ENCODE measurements at regions of chr19 and their contacts with region 1.

Region 1: DNA sequence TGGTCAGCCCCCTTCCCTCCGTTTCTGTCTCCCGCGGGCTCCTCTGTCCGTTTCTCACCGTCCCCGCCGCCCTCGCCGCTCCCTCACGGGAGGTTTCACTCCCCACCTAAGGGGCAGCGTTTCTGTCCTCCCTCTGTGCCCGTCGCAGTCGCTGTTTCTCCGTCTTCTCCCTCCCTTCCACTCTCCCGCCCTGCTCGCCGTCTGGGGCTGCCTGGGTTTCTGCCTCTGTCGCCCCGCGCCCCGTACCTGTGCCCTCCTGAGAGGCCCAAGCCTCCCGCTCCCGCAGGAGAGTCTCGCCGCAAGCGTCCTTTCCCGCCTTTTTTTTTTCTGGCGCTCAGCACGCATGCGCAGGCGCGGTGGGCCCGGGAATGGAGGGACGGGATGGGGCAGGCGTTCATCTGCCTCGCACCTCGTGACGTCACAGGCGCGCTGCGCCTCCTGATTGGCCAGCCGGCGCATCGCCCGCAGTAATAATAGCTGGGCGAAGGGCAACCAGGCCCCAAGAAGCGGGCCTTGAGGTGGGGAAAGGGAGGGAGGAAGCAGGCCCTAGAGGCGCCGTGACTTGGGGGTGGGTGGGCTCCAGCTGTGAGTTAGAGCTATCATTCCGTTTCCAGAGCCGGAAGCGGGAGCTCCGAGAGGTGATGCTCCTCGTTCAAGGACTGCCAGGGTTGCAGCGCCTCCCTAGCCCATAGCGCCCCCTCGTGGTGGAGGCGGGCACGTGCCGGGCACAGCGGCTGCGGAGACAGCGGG is 15.4 kb downstream of the SSC5D start:
- DNase-seq: peak; percentile 82 to 96 (median 91)
- ATAC-seq: peak; percentile 92
- H3K4me3 ChIP-seq: peak overlapping the region; percentile 64
- H3K4me3 Mint-ChIP-seq: peak overlapping the region; percentile 89
- H3K27ac ChIP-seq: peak overlapping the region in 1 of 2 donors; percentile 44
- H3K27ac Mint-ChIP-seq: peak overlapping the region; percentile 76
- H3K4me1 ChIP-seq: peaks cover 13% of the 10 kb centered on the region
- H3K4me1 Mint-ChIP-seq: peaks cover 12% of the 10 kb centered on the region
- H3K27me3 ChIP-seq: no peaks in the 10 kb centered on the region
- H3K27me3 Mint-ChIP-seq: peaks cover 7% of the 10 kb centered on the region
- CTCF ChIP-seq: peak; percentile 98

Region 2: DNA sequence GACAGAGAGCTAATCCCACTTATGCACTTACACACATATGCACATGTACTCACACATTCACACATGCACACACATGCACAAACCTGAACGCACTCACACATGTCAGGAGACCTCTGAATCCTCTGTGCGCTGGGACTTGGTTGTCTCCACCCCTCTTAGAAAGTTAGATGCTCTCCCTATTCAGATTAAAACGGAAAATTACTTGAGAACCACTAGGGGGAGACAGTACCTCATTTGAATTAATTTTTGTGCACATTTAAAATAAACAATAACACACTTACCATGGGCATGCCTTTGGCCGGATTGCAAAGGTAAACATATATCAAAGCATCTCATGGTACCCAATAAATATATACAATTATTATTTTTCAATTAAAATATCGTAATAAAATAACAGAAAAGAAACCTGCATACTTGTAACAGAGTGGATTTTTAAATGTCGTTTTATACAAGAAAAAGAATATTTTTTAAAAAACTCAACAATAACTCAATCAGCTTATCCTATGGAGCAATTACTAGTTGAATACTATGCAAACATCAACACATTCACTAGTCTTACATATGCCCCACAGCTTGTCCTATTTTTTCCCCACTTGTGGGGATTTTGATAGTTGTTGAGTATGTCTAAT is 850.4 kb before region 1 on chr19:
- CTCF ChIA-PET with region 1: interaction called, 3 read pairs
- POLR2A ChIA-PET with region 1: no interaction called
- intact Hi-C with region 1: loop called in 1 of 2 experiments (anchors 10 kb)
- DNase-seq: peak in 1 of 14 experiments; percentile 50
- ATAC-seq: no peak
- H3K4me3 ChIP-seq: no peak overlapping the region
- H3K4me3 Mint-ChIP-seq: no peak overlapping the region
- H3K27ac ChIP-seq: no peak overlapping the region
- H3K27ac Mint-ChIP-seq: no peak overlapping the region
- H3K4me1 ChIP-seq: no peaks in the 10 kb centered on the region
- H3K4me1 Mint-ChIP-seq: no peaks in the 10 kb centered on the region
- H3K27me3 ChIP-seq: peaks cover 0 to 8% of the 10 kb centered on the region in 2 experiments
- H3K27me3 Mint-ChIP-seq: peaks cover 34% of the 10 kb centered on the region
- CTCF ChIP-seq: peak; percentile 68

Region 3: DNA sequence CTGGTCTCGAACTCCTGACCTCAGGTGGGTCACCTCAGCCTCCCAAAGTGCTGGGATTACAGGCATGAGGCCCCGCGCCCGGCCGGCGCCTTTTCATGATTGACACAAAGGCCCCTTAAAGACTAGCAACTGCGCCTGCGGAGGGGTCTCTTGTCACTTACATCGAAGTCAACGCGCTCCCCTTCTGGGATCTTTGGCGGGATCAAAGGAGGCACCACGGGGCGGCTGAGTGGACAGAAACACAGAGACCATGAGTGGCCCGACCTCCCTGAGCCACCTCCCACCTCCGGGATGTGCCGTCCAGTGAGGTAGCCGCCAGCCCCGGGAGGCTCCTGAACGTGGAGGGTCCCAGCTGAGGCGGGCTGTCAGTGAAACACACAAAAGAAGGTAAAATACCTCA is 362.0 kb before region 1 on chr19:
- CTCF ChIA-PET with region 1: interaction called, 27 read pairs
- POLR2A ChIA-PET with region 1: interaction called, 5 read pairs
- intact Hi-C with region 1: loop called (anchors 1 kb)
- DNase-seq: no peak
- ATAC-seq: no peak
- H3K4me3 ChIP-seq: no peak overlapping the region
- H3K4me3 Mint-ChIP-seq: no peak overlapping the region
- H3K27ac ChIP-seq: no peak overlapping the region
- H3K27ac Mint-ChIP-seq: no peak overlapping the region
- H3K4me1 ChIP-seq: peaks cover 20% of the 10 kb centered on the region
- H3K4me1 Mint-ChIP-seq: peaks cover 5% of the 10 kb centered on the region
- H3K27me3 ChIP-seq: peaks cover 50 to 58% of the 10 kb centered on the region in 2 experiments
- H3K27me3 Mint-ChIP-seq: peaks cover 59% of the 10 kb centered on the region
- CTCF ChIP-seq: no peak

Region 4: GRCh38 chr19:55461259-55461973 is 42.3 kb before region 1 on chr19 and contains the start of gene ISOC2:
- CTCF ChIA-PET with region 1: interaction called, 31 read pairs
- POLR2A ChIA-PET with region 1: interaction called, 7 read pairs
- intact Hi-C with region 1: no loop called
- DNase-seq: peak; percentile 100
- ATAC-seq: peak; percentile 98
- H3K4me3 ChIP-seq: peak within 1 kb of the TSS; percentile 83
- H3K4me3 Mint-ChIP-seq: peak within 1 kb of the TSS; percentile 96
- H3K27ac ChIP-seq: peak within 1 kb of the TSS; percentile 47 to 72
- H3K27ac Mint-ChIP-seq: peak within 1 kb of the TSS; percentile 68
- H3K4me1 ChIP-seq: peaks cover 19% of the 10 kb centered on the region
- H3K4me1 Mint-ChIP-seq: peaks cover 17% of the 10 kb centered on the region
- H3K27me3 ChIP-seq: no peaks in the 10 kb centered on the region
- H3K27me3 Mint-ChIP-seq: no peaks in the 10 kb centered on the region
- CTCF ChIP-seq: no peak
- total RNA-seq, gene ISOC2: 1.5 to 2.2 TPM

Region 5: GRCh38 chr19:55476100-55476775 is 27.4 kb before region 1 on chr19 and contains the start of gene ZNF628:
- CTCF ChIA-PET with region 1: interaction called, 27 read pairs
- POLR2A ChIA-PET with region 1: interaction called, 17 read pairs
- intact Hi-C with region 1: no loop called
- DNase-seq: peak; percentile 94 to 99 (median 98)
- ATAC-seq: peak; percentile 93
- H3K4me3 ChIP-seq: peak within 1 kb of the TSS; percentile 76
- H3K4me3 Mint-ChIP-seq: peak within 1 kb of the TSS; percentile 91
- H3K27ac ChIP-seq: peak within 1 kb of the TSS; percentile 72 to 77
- H3K27ac Mint-ChIP-seq: peak within 1 kb of the TSS; percentile 93
- H3K4me1 ChIP-seq: peaks cover 26% of the 10 kb centered on the region
- H3K4me1 Mint-ChIP-seq: peaks cover 38% of the 10 kb centered on the region
- H3K27me3 ChIP-seq: no peaks in the 10 kb centered on the region
- H3K27me3 Mint-ChIP-seq: no peaks in the 10 kb centered on the region
- CTCF ChIP-seq: no peak
- total RNA-seq, gene ZNF628: 26.6 to 27.2 TPM

Region 6: GRCh38 chr19:55605207-55605636 is 101.5 kb after region 1 on chr19:
- CTCF ChIA-PET with region 1: interaction called, 18 read pairs
- POLR2A ChIA-PET with region 1: no interaction called
- intact Hi-C with region 1: no loop called
- DNase-seq: peak; percentile 93 to 99 (median 98)
- ATAC-seq: peak; percentile 78
- H3K4me3 ChIP-seq: peak overlapping the region; percentile 64
- H3K4me3 Mint-ChIP-seq: peak overlapping the region; percentile 86
- H3K27ac ChIP-seq: peak overlapping the region; percentile 85 to 92
- H3K27ac Mint-ChIP-seq: peak overlapping the region; percentile 84
- H3K4me1 ChIP-seq: peaks cover 45% of the 10 kb centered on the region
- H3K4me1 Mint-ChIP-seq: peaks cover 54% of the 10 kb centered on the region
- H3K27me3 ChIP-seq: no peaks in the 10 kb centered on the region
- H3K27me3 Mint-ChIP-seq: no peaks in the 10 kb centered on the region
- CTCF ChIP-seq: no peak

Measured in CD4-positive, alpha-beta T cell (primary cell).